ENCODE measurements at regions of chr2 and their contacts with region 1.

Region 1: GRCh38 chr2:171160119-171160955 is at the start of gene TLK1:
- DNase-seq: peak; percentile 74
- ATAC-seq: peak; percentile 73
- H3K4me3 Mint-ChIP-seq: peak within 1 kb of the TSS; percentile 92
- H3K27ac Mint-ChIP-seq: peak within 1 kb of the TSS; percentile 98
- H3K4me1 Mint-ChIP-seq: peaks cover 60% of the 10 kb centered on the region
- H3K27me3 Mint-ChIP-seq: no peaks in the 10 kb centered on the region
- CTCF ChIP-seq: no peak
- total RNA-seq, gene TLK1: 123 and 125 TPM in 2 replicates

Region 2: GRCh38 chr2:171056307-171056706 is 104.0 kb before region 1 on chr2:
- CTCF ChIA-PET with region 1: no interaction called
- POLR2A ChIA-PET with region 1: no interaction called
- intact Hi-C with region 1: loop called (anchors 5 kb)
- DNase-seq: no peak
- ATAC-seq: no peak
- H3K4me3 Mint-ChIP-seq: no peak overlapping the region
- H3K27ac Mint-ChIP-seq: no peak overlapping the region
- H3K4me1 Mint-ChIP-seq: no peaks in the 10 kb centered on the region
- H3K27me3 Mint-ChIP-seq: no peaks in the 10 kb centered on the region
- CTCF ChIP-seq: no peak

Region 3: GRCh38 chr2:171136024-171136423 is 24.3 kb before region 1 on chr2:
- CTCF ChIA-PET with region 1: no interaction called
- POLR2A ChIA-PET with region 1: no interaction called
- intact Hi-C with region 1: no loop called
- DNase-seq: no peak
- ATAC-seq: no peak
- H3K4me3 Mint-ChIP-seq: no peak overlapping the region
- H3K27ac Mint-ChIP-seq: no peak overlapping the region
- H3K4me1 Mint-ChIP-seq: peaks cover 81% of the 10 kb centered on the region
- H3K27me3 Mint-ChIP-seq: no peaks in the 10 kb centered on the region
- CTCF ChIP-seq: no peak

Region 4: DNA sequence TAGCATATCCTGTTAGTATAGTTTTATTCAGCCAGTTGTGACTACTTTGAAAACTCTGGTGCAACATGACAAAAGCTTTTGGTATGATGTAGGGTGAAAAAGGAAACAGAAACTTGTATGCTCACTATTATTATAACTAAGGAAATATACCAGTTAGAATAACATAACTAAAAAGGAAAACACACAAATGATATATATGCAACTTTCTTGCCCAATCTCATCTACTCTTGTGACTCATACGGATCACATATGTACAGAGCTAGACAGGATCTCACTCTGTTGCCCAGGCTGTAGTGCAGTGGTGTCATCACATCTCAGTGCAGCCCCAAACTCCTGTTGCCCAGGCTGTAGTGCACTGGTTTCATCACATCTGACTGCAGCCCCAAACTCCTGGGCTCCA is 12.8 kb after region 1 on chr2:
- CTCF ChIA-PET with region 1: no interaction called
- POLR2A ChIA-PET with region 1: no interaction called
- intact Hi-C with region 1: no loop called
- DNase-seq: no peak
- ATAC-seq: no peak
- H3K4me3 Mint-ChIP-seq: no peak overlapping the region
- H3K27ac Mint-ChIP-seq: no peak overlapping the region
- H3K4me1 Mint-ChIP-seq: no peaks in the 10 kb centered on the region
- H3K27me3 Mint-ChIP-seq: no peaks in the 10 kb centered on the region
- CTCF ChIP-seq: no peak

Region 5: GRCh38 chr2:171185941-171186340 is 25.6 kb after region 1 on chr2:
- CTCF ChIA-PET with region 1: no interaction called
- POLR2A ChIA-PET with region 1: no interaction called
- intact Hi-C with region 1: loop called (anchors 1 kb)
- DNase-seq: no peak
- ATAC-seq: no peak
- H3K4me3 Mint-ChIP-seq: no peak overlapping the region
- H3K27ac Mint-ChIP-seq: no peak overlapping the region
- H3K4me1 Mint-ChIP-seq: peaks cover 14% of the 10 kb centered on the region
- H3K27me3 Mint-ChIP-seq: no peaks in the 10 kb centered on the region
- CTCF ChIP-seq: no peak

Region 6: GRCh38 chr2:171319164-171319810 is 158.9 kb after region 1 on chr2:
- CTCF ChIA-PET with region 1: interaction called, 3 read pairs
- POLR2A ChIA-PET with region 1: interaction called, 23 read pairs
- intact Hi-C with region 1: loop called (anchors 2 kb)
- DNase-seq: no peak
- ATAC-seq: peak; percentile 61
- H3K4me3 Mint-ChIP-seq: peak overlapping the region; percentile 80
- H3K27ac Mint-ChIP-seq: peak overlapping the region; percentile 92
- H3K4me1 Mint-ChIP-seq: peaks cover 74% of the 10 kb centered on the region
- H3K27me3 Mint-ChIP-seq: no peaks in the 10 kb centered on the region
- CTCF ChIP-seq: no peak

Region 7: GRCh38 chr2:171342067-171342413 is 181.7 kb after region 1 on chr2:
- CTCF ChIA-PET with region 1: no interaction called
- POLR2A ChIA-PET with region 1: interaction called, 35 read pairs
- intact Hi-C with region 1: no loop called
- DNase-seq: no peak
- ATAC-seq: no peak
- H3K4me3 Mint-ChIP-seq: no peak overlapping the region
- H3K27ac Mint-ChIP-seq: peak overlapping the region; percentile 76
- H3K4me1 Mint-ChIP-seq: peaks cover 33% of the 10 kb centered on the region
- H3K27me3 Mint-ChIP-seq: no peaks in the 10 kb centered on the region
- CTCF ChIP-seq: no peak

Region 8: GRCh38 chr2:171687287-171688128 is 527.2 kb after region 1 on chr2 and contains the start of gene DYNC1I2:
- CTCF ChIA-PET with region 1: no interaction called
- POLR2A ChIA-PET with region 1: no interaction called
- intact Hi-C with region 1: loop called (anchors 10 kb)
- DNase-seq: peak; percentile 70
- ATAC-seq: peak; percentile 87
- H3K4me3 Mint-ChIP-seq: peak within 1 kb of the TSS; percentile 95
- H3K27ac Mint-ChIP-seq: peak within 1 kb of the TSS; percentile 88
- H3K4me1 Mint-ChIP-seq: peaks cover 17% of the 10 kb centered on the region
- H3K27me3 Mint-ChIP-seq: peaks cover 2% of the 10 kb centered on the region
- CTCF ChIP-seq: no peak
- total RNA-seq, gene DYNC1I2: 52.0 and 54.6 TPM in 2 replicates

Measured in activated B cell treated with CpG ODN at 0.5 μM for 24 hours (primary cell).